ENCODE measurements at regions of chr12 and their contacts with region 1.

Region 1: DNA sequence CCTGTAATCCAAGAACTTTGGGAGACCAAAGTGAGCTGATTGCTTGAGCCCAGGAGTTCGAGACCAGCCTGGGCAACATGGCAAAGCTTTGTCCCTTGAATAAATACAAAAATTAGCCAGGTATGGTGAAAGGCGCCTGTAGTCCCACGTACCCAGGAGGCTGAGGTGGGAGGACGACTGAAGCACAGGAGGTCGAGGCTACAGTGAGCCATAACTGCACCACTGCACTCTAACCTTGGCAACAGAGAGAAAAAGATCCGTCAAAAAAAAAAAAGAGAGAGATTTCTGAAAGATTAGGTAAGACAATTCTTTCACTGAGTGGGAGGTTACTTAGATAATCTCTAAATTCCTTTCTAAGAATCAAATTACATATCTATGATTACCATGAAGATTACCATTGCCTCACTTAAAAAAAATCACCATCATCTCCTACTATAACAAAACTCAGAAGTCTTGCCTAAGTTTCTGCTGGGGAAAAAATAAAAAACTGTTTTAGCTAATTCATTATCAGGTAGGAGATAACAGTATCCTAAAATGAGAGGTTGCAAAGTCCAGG is 366.7 kb downstream of the DUSP6 start:
- DNase-seq: no peak

Region 2: DNA sequence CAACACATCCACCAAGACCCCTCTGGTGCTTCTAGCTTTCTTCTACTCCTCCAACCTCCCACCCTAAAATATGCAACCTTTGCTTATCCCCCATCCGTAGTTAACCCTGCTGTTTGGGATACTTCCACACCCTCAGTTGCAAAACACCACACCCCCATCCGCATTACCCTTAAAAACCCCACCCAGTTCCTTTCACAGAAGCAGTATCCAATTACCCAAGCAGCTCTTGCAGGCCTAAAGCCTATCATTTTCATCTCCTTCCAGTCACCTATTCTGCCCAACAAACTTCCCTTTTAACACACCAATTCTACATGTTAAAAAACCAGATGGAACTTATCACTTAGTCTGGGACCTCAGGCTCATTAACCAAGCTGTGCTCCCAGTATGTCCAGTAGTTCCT is 755.3 kb before region 1 on chr12:
- intact Hi-C with region 1: loop called in 1 of 2 experiments (anchors 5 kb)
- DNase-seq: no peak

Measured in posterior vena cava (tissue), 2 donors.